ENCODE measurements at regions of chr9 and their contacts with region 1.

Region 1: DNA sequence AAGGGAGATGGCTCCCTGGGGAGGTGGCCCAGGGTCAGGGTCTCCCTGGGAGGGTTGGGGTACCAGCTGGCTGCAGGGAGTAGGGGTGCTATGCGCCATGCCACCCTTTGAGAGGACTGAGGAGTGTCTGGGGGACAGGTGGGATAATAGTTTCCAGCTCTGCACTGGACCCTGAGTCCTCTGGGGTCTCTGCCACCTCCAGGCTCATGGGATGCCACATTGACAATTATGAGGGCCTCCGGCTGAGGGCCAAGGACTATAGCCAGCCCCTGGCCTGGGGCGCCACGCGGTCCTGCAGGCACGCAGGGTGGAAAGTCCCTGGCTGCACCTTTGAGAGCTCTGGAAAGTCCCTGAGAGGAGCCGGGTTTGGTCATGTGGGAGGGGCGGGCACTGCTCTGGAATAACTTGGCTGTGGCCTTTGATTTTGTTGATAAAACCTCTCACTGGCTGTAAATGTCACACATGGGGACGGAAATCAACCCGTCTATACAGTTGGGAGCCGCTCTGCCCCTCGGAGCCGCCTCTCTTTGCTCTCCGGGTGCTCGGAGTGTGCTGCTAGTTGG is 16.0 kb downstream of the TRAF2 start:
- DNase-seq: peak; percentile 90
- H3K4me3 ChIP-seq: peak overlapping the region in 1 of 3 experiments; percentile 28
- H3K27ac ChIP-seq: peak overlapping the region; percentile 94
- H3K4me1 ChIP-seq: peaks cover 33% of the 10 kb centered on the region
- H3K27me3 ChIP-seq: no peaks in the 10 kb centered on the region
- CTCF ChIP-seq: no peak

Region 2: DNA sequence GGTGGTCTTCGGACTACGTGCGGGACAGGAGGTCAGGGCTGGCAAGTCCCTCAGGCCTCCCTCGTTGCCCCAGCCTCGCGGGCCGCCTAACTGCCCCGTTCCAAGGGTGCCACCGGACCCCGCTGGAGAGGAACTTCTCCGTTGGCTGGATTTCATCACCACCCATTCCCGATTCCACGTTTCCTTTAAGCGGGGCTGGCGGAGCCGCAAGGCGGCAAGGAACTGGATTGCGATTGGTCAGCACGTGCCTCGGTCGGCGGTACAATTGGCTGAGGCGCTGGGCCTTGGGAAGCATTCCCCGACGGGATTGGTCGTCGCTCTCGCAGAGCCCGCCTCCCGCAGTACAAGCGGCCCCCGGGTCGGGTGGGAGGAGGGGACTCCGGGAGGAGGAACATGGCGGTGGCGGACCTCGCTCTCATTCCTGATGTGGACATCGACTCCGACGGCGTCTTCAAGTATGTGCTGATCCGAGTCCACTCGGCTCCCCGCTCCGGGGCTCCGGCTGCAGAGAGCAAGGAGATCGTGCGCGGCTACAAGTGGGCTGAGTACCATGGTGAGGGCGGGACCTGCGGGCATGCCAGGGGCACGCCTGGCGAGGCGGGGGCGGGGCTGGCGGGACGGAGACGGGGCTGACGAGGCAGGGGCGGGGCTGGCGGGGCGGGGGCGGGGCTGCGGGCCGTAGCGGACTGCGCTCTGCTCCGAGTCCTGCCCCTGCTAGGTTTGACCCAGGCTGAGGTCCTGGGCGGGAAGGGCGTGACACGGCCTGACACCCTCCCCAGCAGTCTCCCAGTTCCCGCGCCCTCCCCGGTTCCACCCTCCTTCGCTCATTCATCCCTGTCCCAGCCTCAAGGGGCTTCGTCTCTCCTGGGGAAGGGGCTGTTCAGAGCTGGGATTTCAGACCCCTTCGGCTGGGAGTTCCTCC is 53.0 kb before region 1 on chr9 and contains the start of gene PHPT1:
- CTCF ChIA-PET with region 1: no interaction called
- dilution Hi-C with region 1: loop called (anchors 5 kb)
- in situ Hi-C with region 1: no loop called
- intact Hi-C with region 1: loop called (anchors 1 kb)
- DNase-seq: peak; percentile 98
- H3K4me3 ChIP-seq: peak within 1 kb of the TSS; percentile 82 to 93 (median 92)
- H3K27ac ChIP-seq: peak within 1 kb of the TSS; percentile 67
- H3K4me1 ChIP-seq: peaks cover 19% of the 10 kb centered on the region
- H3K27me3 ChIP-seq: peaks cover 22% of the 10 kb centered on the region
- CTCF ChIP-seq: no peak
- total RNA-seq, gene PHPT1: 55.3 to 143 TPM

Region 3: DNA sequence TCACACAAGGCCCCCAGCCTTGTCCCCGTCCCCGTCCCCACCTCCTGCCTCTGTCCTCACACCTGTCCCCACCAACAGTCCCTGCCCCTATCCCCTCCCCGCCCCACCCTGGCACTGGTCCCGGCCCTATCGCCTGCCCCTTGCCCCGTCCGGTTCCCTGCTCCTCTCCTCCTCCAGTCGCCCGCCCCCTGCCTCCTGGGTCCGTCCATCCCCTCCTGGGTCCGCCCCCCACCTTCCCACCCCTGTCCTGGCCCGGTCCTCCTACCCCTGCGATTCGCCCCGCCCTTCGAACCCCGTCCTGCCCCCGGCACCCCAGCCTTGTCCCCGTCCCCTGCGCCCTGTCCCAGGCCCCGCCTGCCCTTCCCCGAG is 36.6 kb before region 1 on chr9:
- CTCF ChIA-PET with region 1: no interaction called
- dilution Hi-C with region 1: no loop called
- in situ Hi-C with region 1: no loop called
- intact Hi-C with region 1: loop called (anchors 5 kb)
- DNase-seq: no peak
- H3K4me3 ChIP-seq: peak overlapping the region; percentile 73 to 96 (median 94)
- H3K27ac ChIP-seq: peak overlapping the region; percentile 35
- H3K4me1 ChIP-seq: peaks cover 4% of the 10 kb centered on the region
- H3K27me3 ChIP-seq: no peaks in the 10 kb centered on the region
- CTCF ChIP-seq: no peak

Region 4: GRCh38 chr9:136885950-136886578 is 16.3 kb before region 1 on chr9 and contains the start of gene TRAF2:
- CTCF ChIA-PET with region 1: no interaction called
- dilution Hi-C with region 1: no loop called
- in situ Hi-C with region 1: no loop called
- intact Hi-C with region 1: loop called (anchors 2 kb)
- DNase-seq: peak; percentile 100
- H3K4me3 ChIP-seq: peak within 1 kb of the TSS; percentile 55 to 83 (median 82)
- H3K27ac ChIP-seq: peak within 1 kb of the TSS; percentile 65
- H3K4me1 ChIP-seq: peaks cover 40% of the 10 kb centered on the region
- H3K27me3 ChIP-seq: no peaks in the 10 kb centered on the region
- CTCF ChIP-seq: no peak
- total RNA-seq, gene TRAF2: 8.3 to 27.8 TPM